Activated CD4-positive, alpha-beta memory T cell treated with anti-CD3 and anti-CD28 coated beads for 36 hours (primary cell): ENCODE measurements at regions of chr1 and their contacts with region 1.

Region 1: GRCh38 chr1:77759071-77760028 is at the start of gene USP33:
- DNase-seq: peak; percentile 95
- H3K4me3 Mint-ChIP-seq: peak within 1 kb of the TSS; percentile 96
- H3K27ac Mint-ChIP-seq: peak within 1 kb of the TSS; percentile 94
- H3K4me1 Mint-ChIP-seq: peaks cover 47% of the 10 kb centered on the region
- H3K27me3 Mint-ChIP-seq: no peaks in the 10 kb centered on the region
- total RNA-seq, gene USP33: 37.7 to 41.0 TPM

Region 2: GRCh38 chr1:77779529-77780281 is 20.4 kb after region 1 on chr1 and contains the start of gene MIGA1:
- CTCF ChIA-PET with region 1: interaction called, 3 read pairs
- POLR2A ChIA-PET with region 1: interaction called, 4 read pairs
- intact Hi-C with region 1: loop called (anchors 1 kb)
- DNase-seq: peak; percentile 90
- H3K4me3 Mint-ChIP-seq: peak within 1 kb of the TSS; percentile 87
- H3K27ac Mint-ChIP-seq: peak within 1 kb of the TSS; percentile 80
- H3K4me1 Mint-ChIP-seq: peaks cover 34% of the 10 kb centered on the region
- H3K27me3 Mint-ChIP-seq: no peaks in the 10 kb centered on the region
- total RNA-seq, gene MIGA1: 9.1 to 9.9 TPM